RWPE1 (cell line): ENCODE measurements at regions of chr17 and their contacts with region 1.

Region 1: DNA sequence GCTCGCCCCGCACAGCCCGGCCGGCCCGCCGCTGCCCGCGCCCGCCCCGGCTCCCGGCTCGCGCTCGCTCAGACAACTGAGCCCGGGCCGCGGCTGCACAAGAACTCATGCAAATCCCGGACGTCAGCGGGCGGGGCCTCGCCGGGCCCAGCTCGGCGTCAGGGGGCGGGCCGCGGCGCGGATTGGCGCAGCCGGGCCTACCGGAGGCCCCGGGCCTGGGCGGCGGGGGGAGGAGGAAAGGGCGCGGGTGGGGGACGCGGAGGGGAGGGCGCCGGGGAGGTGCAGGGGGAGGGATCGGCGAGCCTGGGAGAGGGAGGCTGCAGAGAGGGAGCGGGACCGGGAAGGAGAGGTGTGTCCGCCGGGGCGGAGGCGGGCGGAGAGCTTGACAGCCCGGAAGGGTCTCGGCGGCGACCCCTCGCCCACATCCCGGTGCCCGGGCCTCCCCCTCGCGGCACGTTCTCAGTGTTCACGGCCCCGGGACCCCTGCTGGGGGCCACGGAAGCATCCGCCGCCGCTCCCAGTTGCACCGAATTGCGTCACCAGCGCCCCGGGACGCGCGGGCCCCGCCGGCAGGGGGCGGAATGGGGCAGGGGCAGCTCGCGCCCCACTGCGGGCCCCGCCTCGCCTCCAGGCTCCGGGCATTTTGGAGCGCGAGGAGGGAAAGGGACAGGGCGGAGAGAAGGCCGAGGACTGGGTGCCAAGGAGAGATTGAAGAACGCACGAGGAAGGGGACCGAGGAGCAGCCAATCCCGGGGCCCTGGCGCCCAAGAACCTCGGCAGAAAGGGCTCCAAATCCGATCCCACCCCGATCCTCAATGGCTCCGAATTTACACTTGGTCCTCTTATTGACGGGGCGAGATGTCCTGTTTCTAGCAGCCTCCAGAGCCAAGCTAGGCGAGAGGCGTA is at the start of gene CBX4:
- DNase-seq: peak; percentile 92
- H3K27ac ChIP-seq: peak within 1 kb of the TSS; percentile 97
- CTCF ChIP-seq: peak; percentile 81

Region 2: DNA sequence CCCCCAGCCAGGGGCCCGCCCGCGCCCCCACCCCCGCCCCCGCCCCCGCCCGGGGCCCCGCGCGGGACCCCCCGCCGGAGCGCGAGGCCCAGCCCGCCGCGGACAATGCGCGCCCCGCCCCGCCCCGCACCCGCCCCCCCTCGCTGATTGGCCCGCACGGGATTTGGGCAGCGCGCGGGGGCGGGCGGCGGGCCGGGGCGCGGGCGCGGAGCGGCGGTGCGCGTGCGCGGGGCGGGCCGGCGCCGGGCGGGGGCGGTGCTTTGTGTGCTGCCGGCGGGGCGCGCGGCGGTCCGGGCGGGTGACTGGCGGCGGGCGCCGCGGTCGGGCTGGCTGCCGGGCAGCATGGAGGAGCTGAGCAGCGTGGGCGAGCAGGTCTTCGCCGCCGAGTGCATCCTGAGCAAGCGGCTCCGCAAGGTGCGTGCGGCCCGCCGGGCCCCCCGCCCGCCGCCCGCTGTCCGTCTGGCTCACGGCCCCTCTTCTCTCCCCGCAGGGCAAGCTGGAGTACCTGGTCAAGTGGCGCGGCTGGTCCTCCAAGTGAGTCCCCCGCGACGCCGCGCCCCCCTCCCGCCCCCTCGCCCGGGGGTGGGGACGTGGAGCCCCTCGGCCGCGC is 61.6 kb before region 1 on chr17 and contains the start of gene CBX2:
- CTCF ChIA-PET with region 1: no interaction called
- POLR2A ChIA-PET with region 1: no interaction called
- DNase-seq: peak; percentile 95
- H3K27ac ChIP-seq: peak within 1 kb of the TSS; percentile 63
- CTCF ChIP-seq: no peak

Region 3: GRCh38 chr17:79810130-79811010 is 29.2 kb before region 1 on chr17:
- CTCF ChIA-PET with region 1: interaction called, 14 read pairs
- POLR2A ChIA-PET with region 1: interaction called, 7 read pairs
- DNase-seq: peak; percentile 87
- H3K27ac ChIP-seq: no peak overlapping the region
- CTCF ChIP-seq: no peak

Region 4: DNA sequence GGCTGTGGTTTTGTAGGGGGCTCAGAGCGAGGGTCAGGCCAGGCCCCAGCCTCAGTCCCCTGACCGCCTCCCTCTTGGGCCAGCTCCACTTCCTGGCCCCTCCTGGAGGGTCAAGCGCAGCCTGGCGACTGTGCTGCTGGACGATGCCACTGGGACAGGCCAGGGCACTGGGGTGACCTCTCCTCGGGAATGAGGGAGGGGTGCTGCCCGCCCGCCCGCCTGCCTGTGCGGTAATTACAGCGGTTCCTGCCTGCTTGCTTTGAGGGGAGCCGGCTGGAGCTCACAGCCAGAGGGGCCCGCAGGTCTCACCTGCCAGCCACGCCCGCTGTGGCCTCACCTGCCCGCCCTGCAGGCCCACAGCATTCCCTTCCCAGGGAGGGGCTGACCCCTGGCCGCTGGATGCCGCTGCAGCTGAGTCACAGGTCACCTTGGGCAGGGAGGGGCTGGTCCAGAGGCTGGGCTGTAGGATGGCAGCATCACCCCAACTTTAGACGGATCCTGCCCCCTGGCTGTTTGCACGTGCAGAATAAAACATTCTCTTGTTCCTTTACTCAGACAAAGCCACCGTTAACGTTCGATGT is 76.3 kb after region 1 on chr17:
- CTCF ChIA-PET with region 1: interaction called, 35 read pairs
- POLR2A ChIA-PET with region 1: interaction called, 5 read pairs
- DNase-seq: peak; percentile 96
- H3K27ac ChIP-seq: no peak overlapping the region
- CTCF ChIP-seq: no peak; the same call in 1 of the 2 replicates

Region 5: GRCh38 chr17:79974566-79975497 is 135.2 kb after region 1 on chr17:
- CTCF ChIA-PET with region 1: no interaction called
- POLR2A ChIA-PET with region 1: no interaction called
- DNase-seq: no peak
- H3K27ac ChIP-seq: no peak overlapping the region
- CTCF ChIP-seq: peak; percentile 12; the same call in 1 of the 2 replicates